ENCODE measurements at regions of chr5 and their contacts with region 1.

Region 1: DNA sequence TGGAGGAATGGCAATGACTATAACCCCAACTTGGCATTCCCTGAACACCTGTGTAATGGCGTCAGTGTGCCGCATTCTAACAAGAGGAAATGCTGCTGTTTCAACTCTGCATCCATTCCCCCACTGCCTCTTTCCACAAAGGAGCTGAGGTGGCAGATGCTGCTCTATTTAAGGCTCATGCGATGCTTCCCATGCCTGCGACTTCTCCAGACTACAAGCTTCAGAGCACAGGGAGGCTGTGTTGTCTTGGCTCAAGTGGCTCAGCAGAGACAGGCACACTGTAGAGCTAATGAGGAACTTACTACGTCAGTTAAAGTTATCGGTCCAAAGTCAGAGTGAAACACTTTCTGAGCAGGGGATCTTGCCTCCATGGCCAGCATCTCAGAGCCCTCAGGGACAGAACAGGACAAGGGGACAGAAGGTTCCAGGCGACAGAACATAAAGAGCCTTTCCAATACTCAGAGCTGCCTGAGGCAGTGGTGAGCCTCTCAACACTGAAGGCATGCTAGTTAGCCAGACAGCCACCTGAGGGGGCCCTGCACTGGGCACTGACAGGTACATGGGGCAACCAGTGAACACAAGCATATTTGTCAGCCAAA is 21.8 kb downstream of the TNIP1 start:
- DNase-seq: no peak
- H3K4me3 Mint-ChIP-seq: peak overlapping the region; percentile 31
- H3K27ac Mint-ChIP-seq: peak overlapping the region; percentile 90
- H3K4me1 Mint-ChIP-seq: peaks cover 75% of the 10 kb centered on the region
- H3K27me3 Mint-ChIP-seq: no peaks in the 10 kb centered on the region
- CTCF ChIP-seq: no peak

Region 2: DNA sequence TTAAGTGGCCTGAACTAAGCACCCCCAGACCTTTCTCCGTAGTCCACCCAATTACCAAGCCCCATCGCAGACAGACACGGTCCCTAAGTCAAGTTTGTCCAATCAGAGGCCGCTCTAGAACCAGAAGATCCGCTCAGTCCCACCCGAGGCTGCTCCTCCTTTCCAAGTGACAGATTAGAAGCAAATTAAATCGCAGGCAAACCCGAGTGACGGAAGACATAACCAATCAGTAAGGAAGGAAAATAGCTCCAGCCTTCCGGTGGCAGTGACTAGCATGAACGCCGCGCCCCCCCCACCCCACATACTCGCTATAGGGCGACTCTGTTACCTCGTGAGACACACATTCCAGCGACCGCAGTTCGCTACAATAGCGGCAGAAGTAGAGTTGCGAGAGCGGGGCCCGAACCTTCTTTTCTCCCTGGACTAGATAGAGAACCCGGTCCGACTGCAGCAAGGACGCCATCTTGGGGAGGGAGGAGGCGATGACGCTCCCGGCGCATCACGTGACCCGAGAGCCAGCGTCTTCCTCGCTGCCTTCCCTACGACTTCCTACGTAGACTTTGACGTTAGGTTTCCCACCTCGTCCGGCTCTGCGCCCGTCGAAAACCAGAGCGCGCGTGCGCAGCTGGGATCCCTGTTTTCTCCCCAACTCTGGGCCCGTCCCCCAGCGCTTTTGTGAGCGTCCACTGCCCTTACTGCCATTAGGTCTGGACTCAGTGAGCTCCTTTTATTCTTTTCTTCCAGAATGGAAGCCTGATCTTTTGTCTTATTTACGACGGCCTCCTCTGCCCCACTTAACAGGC is 300.3 kb before region 1 on chr5 and contains the start of gene DCTN4:
- CTCF ChIA-PET with region 1: no interaction called
- intact Hi-C with region 1: no loop called
- DNase-seq: peak; percentile 96
- H3K4me3 Mint-ChIP-seq: no peak within 1 kb of the TSS
- H3K27ac Mint-ChIP-seq: no peak within 1 kb of the TSS
- H3K4me1 Mint-ChIP-seq: peaks cover 10% of the 10 kb centered on the region
- H3K27me3 Mint-ChIP-seq: peaks cover 10% of the 10 kb centered on the region
- CTCF ChIP-seq: no peak
- total RNA-seq, gene DCTN4: 51.9 and 54.1 TPM in 2 replicates

Region 3: DNA sequence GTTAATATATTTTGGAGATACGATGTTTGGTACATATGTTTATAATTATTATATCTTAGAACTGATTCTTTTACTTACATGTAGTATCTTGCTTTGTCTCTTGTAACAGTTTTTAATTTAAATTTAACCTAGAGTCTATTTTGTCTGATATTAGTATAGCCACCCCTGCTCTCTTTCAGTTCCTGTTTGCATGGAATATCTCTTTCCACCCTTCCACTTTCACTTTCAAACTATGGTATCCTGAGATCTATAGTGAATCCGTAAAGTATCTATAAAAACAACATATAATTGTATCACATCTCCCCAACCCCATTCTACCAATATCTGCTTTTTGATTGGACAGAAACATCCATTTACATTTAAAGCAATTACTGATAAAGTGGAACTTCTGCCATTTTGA is 205.4 kb before region 1 on chr5:
- CTCF ChIA-PET with region 1: no interaction called
- intact Hi-C with region 1: no loop called
- DNase-seq: no peak
- H3K4me3 Mint-ChIP-seq: no peak overlapping the region
- H3K27ac Mint-ChIP-seq: no peak overlapping the region
- H3K4me1 Mint-ChIP-seq: no peaks in the 10 kb centered on the region
- H3K27me3 Mint-ChIP-seq: peaks cover 27% of the 10 kb centered on the region
- CTCF ChIP-seq: no peak

Region 4: GRCh38 chr5:151002250-151002649 is 56.7 kb before region 1 on chr5:
- CTCF ChIA-PET with region 1: interaction called, 10 read pairs
- intact Hi-C with region 1: no loop called
- DNase-seq: peak; percentile 52
- H3K4me3 Mint-ChIP-seq: no peak overlapping the region
- H3K27ac Mint-ChIP-seq: no peak overlapping the region
- H3K4me1 Mint-ChIP-seq: no peaks in the 10 kb centered on the region
- H3K27me3 Mint-ChIP-seq: peaks cover 26% of the 10 kb centered on the region
- CTCF ChIP-seq: no peak

Region 5: DNA sequence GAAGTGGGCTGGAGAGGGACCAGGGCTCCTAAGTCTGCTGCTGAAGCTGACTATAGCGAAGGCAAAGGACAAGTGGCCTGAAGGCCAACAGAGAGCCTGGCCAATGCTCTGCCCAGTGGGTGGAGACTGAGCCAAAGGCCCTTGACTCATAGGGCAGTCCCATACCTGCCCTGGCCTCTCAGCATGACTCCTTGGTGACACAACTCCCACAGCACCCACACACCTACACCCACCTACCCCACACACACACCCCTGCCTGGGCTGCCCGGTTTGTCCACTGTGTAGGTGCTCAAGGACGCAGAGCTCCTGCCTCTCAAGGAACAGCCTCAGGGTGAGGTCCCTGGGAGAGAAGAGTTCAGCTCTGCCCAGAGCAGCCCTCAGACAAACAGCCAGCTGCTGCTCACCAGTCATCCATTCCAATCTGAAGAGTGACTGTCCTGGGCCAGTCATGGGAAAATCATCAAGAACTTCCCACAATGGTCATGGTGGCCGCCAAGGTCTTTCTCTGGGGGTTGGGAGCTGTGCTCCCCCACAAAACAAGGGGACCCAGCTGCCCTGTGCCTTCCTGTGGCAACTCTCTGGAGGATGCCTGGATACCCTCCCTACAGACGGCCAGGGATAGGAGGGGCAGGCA is 16.8 kb after region 1 on chr5:
- CTCF ChIA-PET with region 1: interaction called, 4 read pairs
- intact Hi-C with region 1: loop called (anchors 2 kb)
- DNase-seq: peak; percentile 82
- H3K4me3 Mint-ChIP-seq: peak overlapping the region; percentile 75
- H3K27ac Mint-ChIP-seq: peak overlapping the region; percentile 73
- H3K4me1 Mint-ChIP-seq: peaks cover 92% of the 10 kb centered on the region
- H3K27me3 Mint-ChIP-seq: no peaks in the 10 kb centered on the region
- CTCF ChIP-seq: no peak